Left colon (tissue), 2 donors: ENCODE measurements at regions of chr3 and their contacts with region 1.

Region 1: GRCh38 chr3:42839616-42840015 is 30.4 kb downstream of the ACKR2 start:
- DNase-seq: peak in 1 of 2 donors; percentile 24
- ATAC-seq: peak; percentile 93

Region 2: DNA sequence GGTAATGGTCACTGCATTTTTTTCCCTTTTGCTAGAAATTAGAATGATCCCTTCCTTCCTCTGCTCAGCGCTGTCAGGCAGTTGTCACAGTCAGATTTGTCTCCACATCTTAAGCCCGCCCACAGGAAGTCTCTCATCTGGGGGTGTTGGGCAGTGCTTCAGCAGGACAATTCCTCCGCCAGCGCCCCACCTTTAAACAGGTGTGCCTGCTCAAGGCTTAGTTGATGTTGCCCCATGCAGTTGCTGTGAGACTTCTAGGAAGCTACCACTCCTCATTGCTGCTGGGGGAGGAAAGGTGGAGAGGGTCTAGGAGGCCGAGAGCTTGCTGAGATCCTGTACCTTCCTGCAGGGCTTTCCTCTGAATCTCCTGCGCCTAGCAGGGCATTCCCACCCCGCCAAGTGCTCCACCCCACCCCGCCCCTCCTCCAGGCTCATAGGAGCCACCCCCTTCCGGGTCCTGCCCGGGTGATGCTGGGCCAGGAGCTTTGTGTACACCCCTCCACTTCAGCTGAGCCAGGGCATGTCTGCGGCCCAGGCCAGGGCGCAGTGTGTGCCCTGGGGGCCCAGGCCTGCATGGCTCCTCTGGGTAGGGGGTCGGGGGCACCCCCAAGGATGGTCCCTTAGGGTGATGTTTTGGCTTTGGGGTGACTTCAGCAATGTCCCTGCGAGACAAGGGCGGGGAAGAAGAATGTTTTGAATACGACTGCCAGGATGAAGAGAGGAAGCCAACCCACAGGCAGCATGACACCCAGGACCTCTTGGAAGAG is 679.7 kb before region 1 on chr3:
- intact Hi-C with region 1: no loop called
- DNase-seq: peak; percentile 86 to 88
- ATAC-seq: peak; percentile 93

Region 3: GRCh38 chr3:42780892-42781700 is 58.5 kb before region 1 on chr3:
- intact Hi-C with region 1: loop called in 1 of 2 experiments (anchors 5 kb)
- DNase-seq: no peak
- ATAC-seq: peak; percentile 60